HepG2 (cell line): ENCODE measurements at regions of chr13 and their contacts with region 1.

Region 1: DNA sequence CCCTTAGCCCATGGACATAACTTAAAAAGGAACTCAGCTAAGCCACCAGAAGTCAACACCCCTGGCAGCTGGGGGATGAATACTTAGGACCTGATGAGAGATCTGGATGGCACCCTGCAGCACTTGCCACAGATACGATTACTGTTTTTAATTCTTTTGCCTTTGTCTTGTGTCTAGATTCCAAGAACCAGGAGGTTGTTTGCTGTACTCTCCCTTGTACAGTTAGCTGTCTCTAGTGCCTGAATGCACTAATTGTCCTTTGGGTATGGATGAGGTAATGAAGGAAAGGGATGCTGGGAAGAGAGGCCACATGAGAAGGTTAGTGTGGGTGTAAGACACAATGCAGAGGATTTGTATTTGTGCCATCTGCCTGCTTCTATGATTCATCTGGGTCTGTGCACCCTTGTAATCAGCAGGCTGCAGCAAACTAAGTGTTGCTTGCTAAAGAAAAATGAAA is 385.8 kb downstream of the KCNRG start:
- DNase-seq: peak; percentile 5
- ATAC-seq: no peak
- H3K4me3 ChIP-seq: no peak overlapping the region
- H3K27ac ChIP-seq: no peak overlapping the region
- H3K4me1 ChIP-seq: peaks cover 15% of the 10 kb centered on the region
- H3K27me3 ChIP-seq: no peaks in the 10 kb centered on the region
- CTCF ChIP-seq: no peak
- EP300 ChIP-seq: no peak
- POLR2A ChIP-seq: no peak
- RAD21 ChIP-seq: no peak

Region 2: GRCh38 chr13:50529154-50529882 is 128.2 kb after region 1 on chr13:
- CTCF ChIA-PET with region 1: no interaction called
- POLR2A ChIA-PET with region 1: no interaction called
- in situ Hi-C with region 1: no loop called
- intact Hi-C with region 1: loop called (anchors 10 kb)
- DNase-seq: no peak
- ATAC-seq: no peak; the same call in 2 of the 3 replicates
- H3K4me3 ChIP-seq: no peak overlapping the region
- H3K27ac ChIP-seq: peak overlapping the region; percentile 34
- H3K4me1 ChIP-seq: peaks cover 10% of the 10 kb centered on the region
- H3K27me3 ChIP-seq: no peaks in the 10 kb centered on the region
- CTCF ChIP-seq: no peak
- EP300 ChIP-seq: no peak
- POLR2A ChIP-seq: no peak
- RAD21 ChIP-seq: no peak